MCF 10A (cell line): ENCODE measurements at regions of chr12 and their contacts with region 1.

Region 1: GRCh38 chr12:122895705-122896636 is at the start of gene VPS37B:
- DNase-seq: peak; percentile 63
- H3K4me3 Mint-ChIP-seq: peak within 1 kb of the TSS; percentile 88
- H3K27ac Mint-ChIP-seq: peak within 1 kb of the TSS; percentile 91
- H3K4me1 Mint-ChIP-seq: peaks cover 35% of the 10 kb centered on the region
- H3K27me3 Mint-ChIP-seq: no peaks in the 10 kb centered on the region
- CTCF ChIP-seq: no peak
- total RNA-seq, gene VPS37B: 33.8 and 37.6 TPM in 2 replicates

Region 2: DNA sequence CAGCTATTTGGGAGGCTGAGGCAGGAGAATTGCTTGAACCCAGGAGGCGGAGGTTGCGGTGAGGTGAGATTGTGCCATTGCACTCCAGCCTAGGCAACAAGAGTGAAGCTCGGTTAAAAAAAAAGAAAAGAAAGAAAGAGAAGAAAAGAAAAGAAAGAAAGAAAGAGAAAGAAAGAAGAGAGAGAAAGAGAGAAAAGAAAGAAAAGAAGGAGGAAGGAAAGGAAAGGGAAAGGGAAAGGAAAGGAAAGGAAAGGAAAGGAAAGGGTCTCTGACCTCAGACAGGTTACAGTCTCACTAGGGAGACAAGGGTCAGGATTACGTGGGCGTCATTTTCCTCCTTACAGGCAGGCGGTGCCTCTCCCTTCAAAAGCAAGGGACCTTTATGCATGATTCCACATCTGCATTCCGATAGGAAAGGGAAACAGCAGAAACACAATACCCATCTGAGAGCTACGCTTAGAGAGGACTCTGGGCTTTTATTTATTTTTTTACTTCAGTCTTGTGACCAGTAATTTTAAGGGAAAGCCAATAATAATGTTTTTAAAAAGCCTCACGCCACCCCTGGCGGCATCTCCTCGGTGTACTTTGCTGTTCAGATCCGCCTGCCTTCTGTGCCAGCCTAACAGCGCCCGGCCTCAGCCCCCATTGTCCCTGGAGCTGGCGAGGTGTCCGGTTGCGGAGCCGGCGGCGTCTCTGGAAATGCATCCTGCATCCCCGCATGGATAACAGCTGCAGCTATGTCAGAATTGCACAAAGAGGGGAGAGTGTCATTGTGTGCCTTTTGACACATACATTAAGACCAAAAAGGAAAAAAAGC is 61.7 kb before region 1 on chr12:
- CTCF ChIA-PET with region 1: interaction called, 4 read pairs
- POLR2A ChIA-PET with region 1: interaction called, 10 read pairs
- intact Hi-C with region 1: no loop called
- DNase-seq: peak; percentile 56
- H3K4me3 Mint-ChIP-seq: peak overlapping the region; percentile 75
- H3K27ac Mint-ChIP-seq: no peak overlapping the region
- H3K4me1 Mint-ChIP-seq: peaks cover 32% of the 10 kb centered on the region
- H3K27me3 Mint-ChIP-seq: no peaks in the 10 kb centered on the region
- CTCF ChIP-seq: no peak

Region 3: GRCh38 chr12:122860346-122861090 is 35.5 kb before region 1 on chr12:
- CTCF ChIA-PET with region 1: interaction called, 12 read pairs
- POLR2A ChIA-PET with region 1: interaction called, 12 read pairs
- intact Hi-C with region 1: no loop called
- DNase-seq: peak; percentile 79
- H3K4me3 Mint-ChIP-seq: no peak overlapping the region
- H3K27ac Mint-ChIP-seq: no peak overlapping the region
- H3K4me1 Mint-ChIP-seq: peaks cover 6% of the 10 kb centered on the region
- H3K27me3 Mint-ChIP-seq: no peaks in the 10 kb centered on the region
- CTCF ChIP-seq: peak; percentile 85

Region 4: DNA sequence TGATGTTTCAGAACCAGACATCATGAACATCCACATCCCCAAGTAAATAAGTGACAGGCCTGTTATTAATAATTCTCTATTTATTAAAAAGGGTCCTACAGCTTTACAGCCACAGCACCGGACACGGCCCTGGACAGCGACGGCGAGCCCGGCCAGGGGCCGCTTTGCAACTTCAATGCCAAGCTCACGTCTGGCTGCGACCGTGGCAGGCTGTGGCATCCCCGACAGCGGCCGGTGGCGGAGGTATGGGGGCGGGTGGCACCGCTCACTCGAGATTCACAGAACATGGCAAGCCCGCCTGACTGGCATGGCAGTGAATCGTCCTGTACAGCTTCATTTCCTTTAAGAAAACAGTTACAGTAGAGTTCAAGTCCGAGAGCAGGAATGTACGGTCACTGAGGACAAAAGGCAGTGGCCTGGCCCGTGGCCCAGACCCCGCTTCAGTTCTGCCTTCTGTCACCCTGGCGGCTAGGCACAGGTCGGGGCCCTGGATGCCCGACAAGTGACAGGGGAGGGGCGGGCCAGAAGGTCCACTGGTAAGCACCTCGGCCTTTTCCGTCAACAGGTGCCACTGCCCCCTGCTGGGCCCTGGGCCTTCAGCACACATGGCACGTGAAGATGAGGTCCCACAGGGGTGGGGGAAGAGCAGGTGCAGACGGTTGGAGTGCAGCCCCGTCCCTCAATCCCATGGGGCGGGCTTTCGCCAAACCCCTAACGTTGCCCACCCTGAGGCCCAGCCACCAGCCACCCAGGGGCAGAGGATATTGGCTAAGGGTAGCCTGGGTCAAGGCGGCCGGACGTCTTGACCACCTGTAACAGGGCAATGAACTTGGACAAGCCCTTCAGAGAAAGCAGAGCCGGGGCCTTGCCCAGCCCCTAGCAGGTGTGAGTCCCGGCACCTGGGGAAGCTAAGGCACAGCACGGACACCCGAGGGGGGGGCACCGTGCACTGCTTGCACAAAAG is 30.4 kb before region 1 on chr12:
- CTCF ChIA-PET with region 1: interaction called, 12 read pairs
- POLR2A ChIA-PET with region 1: interaction called, 16 read pairs
- intact Hi-C with region 1: loop called (anchors 2 kb)
- DNase-seq: no peak
- H3K4me3 Mint-ChIP-seq: no peak overlapping the region
- H3K27ac Mint-ChIP-seq: no peak overlapping the region
- H3K4me1 Mint-ChIP-seq: peaks cover 18% of the 10 kb centered on the region
- H3K27me3 Mint-ChIP-seq: no peaks in the 10 kb centered on the region
- CTCF ChIP-seq: peak; percentile 38

Region 5: DNA sequence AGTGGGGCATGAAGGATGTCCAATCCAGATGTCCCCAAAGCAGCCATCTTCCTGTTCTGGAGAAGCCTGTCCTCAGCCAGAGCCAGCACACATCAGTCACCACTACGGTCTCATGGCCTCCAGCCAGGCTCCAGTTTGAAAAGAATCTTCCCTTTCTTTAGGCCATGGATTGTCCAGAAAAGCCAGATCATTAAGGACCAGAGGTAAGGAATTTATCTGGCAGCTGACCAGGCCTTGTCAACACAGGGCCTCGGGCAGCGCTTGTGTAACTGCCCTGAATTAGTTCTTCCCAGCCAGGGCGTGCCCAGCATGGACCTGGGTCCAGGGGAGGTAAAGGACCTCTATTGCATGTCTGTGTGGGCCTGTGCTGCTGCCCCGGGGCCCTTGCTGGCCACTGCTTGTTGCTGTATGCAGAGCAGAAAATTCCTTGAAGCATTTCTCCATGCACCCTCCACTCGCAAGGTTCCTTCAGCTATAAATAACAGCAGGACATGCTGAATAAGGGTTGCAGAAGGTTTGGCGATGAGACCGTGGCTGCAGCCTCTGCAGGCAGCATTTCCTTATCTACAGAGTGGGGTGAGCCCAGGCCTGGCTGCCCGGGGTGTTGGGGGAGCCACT is 21.6 kb after region 1 on chr12:
- CTCF ChIA-PET with region 1: interaction called, 3 read pairs
- POLR2A ChIA-PET with region 1: interaction called, 23 read pairs
- intact Hi-C with region 1: no loop called
- DNase-seq: peak; percentile 96
- H3K4me3 Mint-ChIP-seq: no peak overlapping the region
- H3K27ac Mint-ChIP-seq: no peak overlapping the region
- H3K4me1 Mint-ChIP-seq: peaks cover 26% of the 10 kb centered on the region
- H3K27me3 Mint-ChIP-seq: no peaks in the 10 kb centered on the region
- CTCF ChIP-seq: no peak

Region 6: DNA sequence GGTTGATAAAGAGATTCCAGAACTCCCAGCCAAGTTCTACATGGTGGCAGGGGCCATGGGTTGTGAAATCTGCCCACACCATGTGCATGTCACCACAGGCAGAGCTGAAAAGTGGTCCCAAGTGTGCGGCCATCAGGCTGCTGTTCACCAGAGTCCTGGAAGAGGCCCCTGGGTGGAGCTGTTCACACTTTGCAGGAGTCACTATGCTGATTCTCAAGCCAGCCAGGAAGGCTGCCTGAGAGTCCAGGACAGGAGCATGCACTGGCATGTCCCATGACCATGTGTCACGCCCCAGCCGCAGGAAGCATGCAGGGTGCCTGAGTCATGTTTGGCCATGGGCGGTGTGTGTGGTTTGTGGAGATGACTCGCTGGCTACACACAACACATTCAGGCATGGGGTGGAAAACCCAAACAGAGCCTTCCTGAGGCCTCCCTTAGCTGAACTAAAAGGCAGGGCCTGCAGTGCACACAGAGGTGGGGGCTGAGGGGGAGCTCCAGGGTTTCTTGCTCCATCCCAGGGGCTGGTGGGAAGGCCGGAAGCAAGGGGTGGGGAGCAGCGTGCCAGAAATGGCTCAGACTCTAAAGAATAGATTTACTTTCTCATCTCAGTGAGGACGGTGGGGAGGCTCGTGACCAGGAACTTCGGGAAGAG is 50.8 kb after region 1 on chr12:
- CTCF ChIA-PET with region 1: interaction called, 13 read pairs
- POLR2A ChIA-PET with region 1: interaction called, 240 read pairs
- intact Hi-C with region 1: no loop called
- DNase-seq: peak; percentile 100
- H3K4me3 Mint-ChIP-seq: peak overlapping the region; percentile 46
- H3K27ac Mint-ChIP-seq: peak overlapping the region; percentile 93
- H3K4me1 Mint-ChIP-seq: peaks cover 47% of the 10 kb centered on the region
- H3K27me3 Mint-ChIP-seq: no peaks in the 10 kb centered on the region
- CTCF ChIP-seq: peak; percentile 22